ENCODE measurements at regions of chr5 and their contacts with region 1.

Region 1: DNA sequence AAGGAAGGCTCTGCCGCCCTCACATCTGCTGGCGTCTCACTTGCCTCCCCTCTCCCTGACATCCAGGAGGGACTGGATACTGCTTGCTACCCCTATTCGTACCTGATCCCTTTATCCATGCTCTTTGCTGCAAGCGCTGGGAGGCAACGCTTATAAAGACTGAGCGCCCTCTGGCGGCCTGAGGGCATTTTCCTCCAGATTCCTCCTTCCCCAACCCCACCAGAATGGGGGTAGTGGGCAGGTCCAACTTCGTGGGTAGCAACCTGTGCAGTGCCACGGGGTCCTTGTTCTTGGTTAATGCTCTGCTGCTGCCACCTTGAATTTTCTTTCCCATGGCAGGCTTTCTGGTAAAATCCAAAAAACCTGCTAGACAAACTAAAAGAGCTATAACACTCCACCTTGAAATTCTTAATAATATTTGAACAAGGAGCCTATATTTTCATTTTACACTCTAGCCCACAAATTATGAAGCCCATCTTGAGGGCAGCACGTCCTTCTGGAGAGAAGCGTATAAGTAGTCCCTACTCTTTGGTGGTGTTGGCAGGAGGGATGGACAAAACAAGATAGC is 52.4 kb downstream of the JADE2 start:
- DNase-seq: peak; percentile 80
- H3K4me3 ChIP-seq: no peak overlapping the region
- H3K27ac ChIP-seq: peak overlapping the region; percentile 67
- H3K4me1 ChIP-seq: peaks cover 37% of the 10 kb centered on the region
- H3K27me3 ChIP-seq: no peaks in the 10 kb centered on the region
- CTCF ChIP-seq: peak; percentile 83 to 88
- POLR2A ChIP-seq: no peak

Region 2: GRCh38 chr5:134176511-134177368 is 401.1 kb before region 1 on chr5 and contains the start of gene SKP1:
- CTCF ChIA-PET with region 1: no interaction called
- POLR2A ChIA-PET with region 1: no interaction called
- dilution Hi-C with region 1: no loop called
- intact Hi-C with region 1: loop called (anchors 5 kb)
- DNase-seq: peak; percentile 86
- H3K4me3 ChIP-seq: peak within 1 kb of the TSS; percentile 91 to 99 (median 98)
- H3K27ac ChIP-seq: peak within 1 kb of the TSS; percentile 85
- H3K4me1 ChIP-seq: peaks cover 18% of the 10 kb centered on the region
- H3K27me3 ChIP-seq: no peaks in the 10 kb centered on the region
- CTCF ChIP-seq: no peak
- POLR2A ChIP-seq: peak; percentile 99
- total RNA-seq, gene SKP1: 311 and 320 TPM in 2 replicates

Region 3: GRCh38 chr5:134304311-134304710 is 273.6 kb before region 1 on chr5:
- CTCF ChIA-PET with region 1: interaction called, 18 read pairs
- POLR2A ChIA-PET with region 1: no interaction called
- dilution Hi-C with region 1: no loop called
- intact Hi-C with region 1: no loop called
- DNase-seq: no peak
- H3K4me3 ChIP-seq: no peak overlapping the region
- H3K27ac ChIP-seq: no peak overlapping the region
- H3K4me1 ChIP-seq: no peaks in the 10 kb centered on the region
- H3K27me3 ChIP-seq: no peaks in the 10 kb centered on the region
- CTCF ChIP-seq: no peak
- POLR2A ChIP-seq: no peak

Region 4: DNA sequence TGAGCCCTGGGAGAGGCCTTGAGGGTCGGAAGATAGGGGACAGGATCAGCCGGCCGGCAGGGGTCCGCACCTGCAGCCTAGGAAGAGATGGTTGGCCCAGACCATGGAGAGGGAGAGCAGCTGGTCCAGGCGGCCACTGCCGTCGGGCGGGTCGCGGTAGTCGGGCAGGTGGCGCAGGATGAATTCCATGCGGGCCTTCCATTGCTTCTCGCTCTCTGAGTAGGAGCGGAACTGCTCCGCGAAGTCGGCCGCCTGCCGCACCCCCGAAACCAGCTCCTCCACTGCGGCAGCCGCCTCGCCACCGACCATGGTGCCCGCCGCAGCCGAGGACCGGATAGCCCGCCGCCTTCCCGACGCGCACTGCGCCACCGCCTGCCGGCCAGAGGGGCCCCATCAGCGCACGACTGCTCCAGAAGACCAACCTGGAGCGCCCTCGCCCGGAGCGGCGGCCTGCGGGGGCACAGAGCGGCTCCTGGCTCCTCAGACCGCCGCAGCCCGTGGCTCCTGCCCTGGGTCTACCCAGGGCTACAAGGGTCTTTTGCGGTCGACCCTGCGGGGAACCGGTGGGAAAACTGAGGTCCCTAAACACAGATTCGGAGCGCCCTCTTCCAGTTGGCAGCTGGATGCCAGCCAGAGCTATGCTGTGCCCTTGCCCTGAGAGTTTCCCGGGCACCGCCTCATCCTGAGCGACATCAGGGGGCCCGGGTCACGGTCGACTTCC is 166.2 kb before region 1 on chr5 and contains the start of gene CDKN2AIPNL:
- CTCF ChIA-PET with region 1: interaction called, 13 read pairs
- POLR2A ChIA-PET with region 1: no interaction called
- dilution Hi-C with region 1: no loop called
- intact Hi-C with region 1: loop called (anchors 1 kb)
- DNase-seq: peak; percentile 86
- H3K4me3 ChIP-seq: peak within 1 kb of the TSS; percentile 75 to 88 (median 84)
- H3K27ac ChIP-seq: peak within 1 kb of the TSS; percentile 40
- H3K4me1 ChIP-seq: peaks cover 15% of the 10 kb centered on the region
- H3K27me3 ChIP-seq: no peaks in the 10 kb centered on the region
- CTCF ChIP-seq: peak; percentile 71 to 86
- POLR2A ChIP-seq: peak; percentile 86
- total RNA-seq, gene CDKN2AIPNL: 35.1 and 36.5 TPM in 2 replicates

Region 5: DNA sequence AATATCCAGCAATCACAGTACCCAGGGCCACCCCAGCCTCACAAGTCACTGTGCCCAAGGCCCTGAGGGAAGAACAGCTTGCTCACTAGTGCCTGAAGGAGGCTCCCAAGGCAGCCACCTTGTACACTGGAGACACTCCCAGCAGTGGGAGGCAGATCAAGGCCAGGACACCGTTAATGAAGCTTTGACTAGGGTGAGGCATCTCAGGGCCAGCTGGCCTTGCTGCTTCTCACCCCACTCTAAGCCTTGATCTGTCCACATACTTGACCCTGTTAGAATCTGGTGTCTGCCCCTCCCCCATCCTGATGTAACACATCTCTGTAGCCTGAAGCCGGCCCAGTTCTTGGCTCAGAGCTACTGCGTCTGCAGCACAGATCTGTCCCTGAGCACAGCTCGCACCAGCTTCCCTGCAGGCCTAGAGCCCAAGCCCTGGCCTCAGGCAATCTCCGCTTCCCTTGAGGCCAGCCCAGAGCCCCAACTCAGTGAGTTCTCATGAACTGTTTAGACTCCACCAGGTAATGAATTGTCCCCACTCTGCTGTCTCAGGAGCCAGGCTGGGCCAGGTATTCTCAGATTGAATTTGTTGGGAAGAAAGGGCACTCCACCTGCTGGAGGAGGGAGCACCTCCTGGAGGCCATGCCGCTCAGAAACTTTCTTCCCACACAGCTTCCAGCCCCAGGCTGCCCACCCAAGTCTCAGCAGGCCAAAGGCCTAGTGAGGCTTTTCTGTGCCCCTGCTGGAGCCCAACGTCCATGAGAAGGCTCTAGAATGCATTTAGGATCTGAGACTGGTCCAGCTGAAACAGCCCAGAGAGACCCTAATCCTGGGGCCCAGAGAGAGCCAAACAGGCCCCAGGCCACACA is 65.9 kb before region 1 on chr5:
- CTCF ChIA-PET with region 1: interaction called, 13 read pairs
- POLR2A ChIA-PET with region 1: interaction called, 3 read pairs
- dilution Hi-C with region 1: no loop called
- intact Hi-C with region 1: no loop called
- DNase-seq: no peak
- H3K4me3 ChIP-seq: no peak overlapping the region
- H3K27ac ChIP-seq: peak overlapping the region; percentile 42
- H3K4me1 ChIP-seq: peaks cover 15% of the 10 kb centered on the region
- H3K27me3 ChIP-seq: no peaks in the 10 kb centered on the region
- CTCF ChIP-seq: no peak
- POLR2A ChIP-seq: no peak

Region 6: DNA sequence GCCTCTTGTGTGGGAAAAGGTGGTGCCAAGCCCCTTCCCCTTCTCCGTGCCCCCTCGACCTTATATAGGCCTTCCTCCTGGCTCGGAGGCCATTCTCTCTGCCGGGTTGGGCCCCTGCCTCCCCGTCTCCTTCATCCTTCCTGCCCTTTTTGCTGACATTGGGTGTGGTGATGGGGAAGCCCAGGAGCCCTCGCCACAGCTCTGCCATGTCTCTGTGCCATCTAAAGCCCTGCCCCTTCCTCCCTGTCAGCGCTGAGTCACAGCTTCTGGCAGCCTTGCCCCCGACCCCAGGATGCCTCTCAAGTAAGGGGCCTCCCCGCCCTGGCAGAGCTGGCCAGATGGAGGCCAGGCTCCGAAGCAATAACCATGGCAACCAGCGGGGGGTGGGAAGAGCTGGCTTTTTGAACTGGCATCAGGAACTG is 22.0 kb before region 1 on chr5:
- CTCF ChIA-PET with region 1: interaction called, 112 read pairs
- POLR2A ChIA-PET with region 1: no interaction called
- dilution Hi-C with region 1: no loop called
- intact Hi-C with region 1: no loop called
- DNase-seq: peak; percentile 91
- H3K4me3 ChIP-seq: no peak overlapping the region
- H3K27ac ChIP-seq: peak overlapping the region; percentile 88
- H3K4me1 ChIP-seq: peaks cover 56% of the 10 kb centered on the region
- H3K27me3 ChIP-seq: no peaks in the 10 kb centered on the region
- CTCF ChIP-seq: no peak
- POLR2A ChIP-seq: no peak

Region 7: DNA sequence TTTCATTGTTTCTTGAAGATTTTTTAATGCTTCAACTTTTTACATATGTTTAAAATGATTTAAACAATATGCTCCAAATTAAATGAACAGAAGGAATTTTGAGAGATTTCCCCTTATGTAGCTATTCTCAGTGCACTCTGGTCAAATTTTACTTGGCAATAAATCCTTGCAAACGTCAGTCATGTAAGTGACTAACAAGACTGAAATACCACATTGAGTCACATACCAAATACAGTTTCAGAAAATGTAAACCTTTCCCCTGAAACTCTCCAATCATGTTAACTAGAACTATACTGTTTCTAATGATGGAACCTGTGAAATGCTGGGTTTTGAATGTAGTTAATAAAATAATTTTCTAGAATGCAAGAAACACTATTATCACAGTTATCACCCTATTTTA is 25.2 kb after region 1 on chr5:
- CTCF ChIA-PET with region 1: no interaction called
- POLR2A ChIA-PET with region 1: no interaction called
- dilution Hi-C with region 1: no loop called
- intact Hi-C with region 1: no loop called
- DNase-seq: no peak
- H3K4me3 ChIP-seq: no peak overlapping the region
- H3K27ac ChIP-seq: no peak overlapping the region
- H3K4me1 ChIP-seq: no peaks in the 10 kb centered on the region
- H3K27me3 ChIP-seq: no peaks in the 10 kb centered on the region
- CTCF ChIP-seq: no peak
- POLR2A ChIP-seq: no peak

Region 8: DNA sequence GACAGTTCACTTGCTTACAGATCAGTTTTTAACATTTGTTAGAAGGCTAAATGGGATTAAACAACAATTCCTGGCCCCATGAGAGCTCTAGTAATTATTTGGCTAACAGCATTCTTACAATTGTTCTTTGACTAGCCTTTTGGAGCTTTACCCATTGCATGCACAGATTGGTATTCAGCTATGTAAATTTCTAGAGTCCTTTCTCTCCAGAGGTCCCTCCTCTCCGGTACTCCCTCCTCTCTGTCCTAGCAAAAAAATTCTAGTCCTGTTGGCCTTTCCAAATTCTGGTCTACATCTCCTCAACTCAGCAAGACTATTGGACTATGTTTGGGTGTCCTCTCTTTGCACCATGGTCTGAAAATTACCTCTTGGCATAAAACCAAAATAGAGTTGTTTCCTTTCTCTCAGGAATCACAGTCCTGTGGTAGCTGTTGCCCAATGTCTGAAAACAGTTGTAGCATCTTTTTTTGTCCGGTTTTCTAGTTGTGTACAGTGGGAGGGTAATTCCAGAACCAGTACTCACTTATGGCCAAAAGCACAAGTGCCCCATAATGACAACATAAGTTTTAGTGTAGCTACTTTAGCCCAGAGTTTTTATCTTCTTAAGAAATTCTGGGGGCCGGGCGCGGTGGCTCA is 36.7 kb after region 1 on chr5:
- CTCF ChIA-PET with region 1: no interaction called
- POLR2A ChIA-PET with region 1: no interaction called
- dilution Hi-C with region 1: no loop called
- intact Hi-C with region 1: no loop called
- DNase-seq: peak; percentile 9
- H3K4me3 ChIP-seq: no peak overlapping the region
- H3K27ac ChIP-seq: peak overlapping the region; percentile 4
- H3K4me1 ChIP-seq: peaks cover 8% of the 10 kb centered on the region
- H3K27me3 ChIP-seq: no peaks in the 10 kb centered on the region
- CTCF ChIP-seq: no peak
- POLR2A ChIP-seq: no peak

Region 9: GRCh38 chr5:134920848-134921575 is 343.1 kb after region 1 on chr5:
- CTCF ChIA-PET with region 1: no interaction called
- POLR2A ChIA-PET with region 1: no interaction called
- dilution Hi-C with region 1: no loop called
- intact Hi-C with region 1: no loop called
- DNase-seq: no peak
- H3K4me3 ChIP-seq: no peak overlapping the region
- H3K27ac ChIP-seq: no peak overlapping the region
- H3K4me1 ChIP-seq: no peaks in the 10 kb centered on the region
- H3K27me3 ChIP-seq: no peaks in the 10 kb centered on the region
- CTCF ChIP-seq: no peak
- POLR2A ChIP-seq: no peak

Region 10: DNA sequence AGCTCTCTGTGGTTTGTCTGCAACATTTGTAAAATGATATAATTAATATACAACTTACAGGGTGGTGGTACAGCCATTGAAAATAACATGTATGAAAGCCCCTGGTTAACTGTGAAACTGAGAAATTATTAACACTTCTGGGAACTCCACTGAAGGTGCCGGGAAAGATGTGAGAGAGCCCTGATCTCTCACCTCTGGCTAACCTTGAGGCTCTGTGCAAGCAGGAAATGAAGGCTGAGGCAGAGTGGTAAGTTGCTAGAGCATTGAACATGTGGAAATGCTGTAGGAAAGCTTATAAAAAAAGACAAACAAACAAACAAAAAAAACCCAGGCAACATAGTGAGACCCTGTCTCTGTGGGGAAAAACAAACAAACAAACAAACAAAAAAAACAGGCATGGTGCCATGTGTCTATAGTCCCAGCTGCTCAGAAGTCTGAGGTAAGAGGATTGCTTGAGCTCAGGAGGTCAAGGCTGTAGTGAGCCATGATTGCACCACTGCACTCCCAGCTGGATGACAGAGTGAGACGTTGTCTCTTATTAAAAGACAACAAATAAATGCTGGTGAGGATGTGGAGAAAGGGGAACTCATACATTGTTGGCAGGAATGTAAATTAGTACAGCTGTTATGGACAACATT is 397.3 kb after region 1 on chr5:
- CTCF ChIA-PET with region 1: no interaction called
- POLR2A ChIA-PET with region 1: no interaction called
- dilution Hi-C with region 1: no loop called
- intact Hi-C with region 1: no loop called
- DNase-seq: no peak
- H3K4me3 ChIP-seq: no peak overlapping the region
- H3K27ac ChIP-seq: no peak overlapping the region
- H3K4me1 ChIP-seq: no peaks in the 10 kb centered on the region
- H3K27me3 ChIP-seq: no peaks in the 10 kb centered on the region
- CTCF ChIP-seq: no peak
- POLR2A ChIP-seq: no peak